Activated naive CD4-positive, alpha-beta T cell treated with anti-CD3 and anti-CD28 coated beads for 36 hours (primary cell): ENCODE measurements at regions of chr1 and their contacts with region 1.

Region 1: GRCh38 chr1:39720094-39720999 is 18.3 kb upstream of the PPIE start:
- DNase-seq: no peak
- H3K4me3 Mint-ChIP-seq: no peak overlapping the region
- H3K27ac Mint-ChIP-seq: no peak overlapping the region
- H3K4me1 Mint-ChIP-seq: no peaks in the 10 kb centered on the region
- H3K27me3 Mint-ChIP-seq: peaks cover 36% of the 10 kb centered on the region

Region 2: DNA sequence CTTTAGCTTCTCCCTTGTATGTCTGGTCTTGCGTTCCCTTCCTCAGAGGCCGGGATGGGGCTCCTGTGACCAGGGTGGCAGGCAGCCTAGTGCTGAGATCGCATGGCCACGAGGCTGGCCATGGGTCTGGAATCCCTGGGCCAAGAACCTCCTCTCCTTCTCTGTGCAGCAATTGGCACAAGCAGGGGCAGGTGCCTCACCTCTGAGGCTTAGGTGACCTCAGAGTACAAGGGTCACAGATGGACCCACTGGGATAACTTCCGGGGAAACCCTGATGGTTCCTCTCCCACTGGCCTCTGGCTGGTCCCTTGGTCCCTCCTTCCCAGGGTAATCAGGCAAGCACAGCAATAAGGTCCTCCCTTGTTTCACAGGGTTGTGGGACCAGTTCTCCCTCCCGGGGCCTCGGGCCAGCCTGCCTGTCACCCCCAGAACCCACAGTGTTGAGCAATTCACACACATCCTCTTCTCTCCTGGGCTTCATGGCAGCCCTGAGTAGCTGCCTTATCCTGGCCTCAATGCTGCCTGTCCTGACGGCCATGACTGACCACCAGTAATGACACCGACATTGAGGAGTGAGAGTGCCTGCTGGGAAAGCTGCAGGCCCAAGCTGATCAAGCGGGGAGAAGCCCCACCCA is 190.3 kb before region 1 on chr1:
- CTCF ChIA-PET with region 1: no interaction called
- intact Hi-C with region 1: no loop called
- DNase-seq: no peak
- H3K4me3 Mint-ChIP-seq: no peak overlapping the region
- H3K27ac Mint-ChIP-seq: no peak overlapping the region
- H3K4me1 Mint-ChIP-seq: peaks cover 2% of the 10 kb centered on the region
- H3K27me3 Mint-ChIP-seq: no peaks in the 10 kb centered on the region

Region 3: DNA sequence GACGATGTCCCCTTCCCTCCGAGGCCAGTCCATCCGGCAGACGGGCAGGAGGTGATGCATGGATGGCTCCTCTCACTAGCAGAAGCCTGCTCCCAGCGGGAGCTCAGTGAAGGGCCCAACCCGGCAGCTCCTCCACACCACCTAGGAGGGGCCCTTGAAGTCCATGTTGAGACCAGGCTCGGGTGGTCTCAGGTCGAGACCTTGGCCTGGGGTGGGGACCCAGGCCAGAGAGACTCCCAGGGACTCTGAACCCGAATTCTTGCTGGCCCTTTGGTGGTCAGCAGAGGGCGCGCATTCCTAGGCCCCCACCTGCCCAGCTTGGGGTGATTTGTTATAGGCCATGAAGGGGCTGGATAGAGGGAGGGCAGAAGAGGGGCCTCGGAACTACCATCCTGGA is 47.8 kb before region 1 on chr1:
- CTCF ChIA-PET with region 1: interaction called, 12 read pairs
- intact Hi-C with region 1: loop called (anchors 1 kb)
- DNase-seq: peak; percentile 54
- H3K4me3 Mint-ChIP-seq: peak overlapping the region; percentile 17
- H3K27ac Mint-ChIP-seq: no peak overlapping the region
- H3K4me1 Mint-ChIP-seq: peaks cover 6% of the 10 kb centered on the region
- H3K27me3 Mint-ChIP-seq: peaks cover 35% of the 10 kb centered on the region

Region 4: DNA sequence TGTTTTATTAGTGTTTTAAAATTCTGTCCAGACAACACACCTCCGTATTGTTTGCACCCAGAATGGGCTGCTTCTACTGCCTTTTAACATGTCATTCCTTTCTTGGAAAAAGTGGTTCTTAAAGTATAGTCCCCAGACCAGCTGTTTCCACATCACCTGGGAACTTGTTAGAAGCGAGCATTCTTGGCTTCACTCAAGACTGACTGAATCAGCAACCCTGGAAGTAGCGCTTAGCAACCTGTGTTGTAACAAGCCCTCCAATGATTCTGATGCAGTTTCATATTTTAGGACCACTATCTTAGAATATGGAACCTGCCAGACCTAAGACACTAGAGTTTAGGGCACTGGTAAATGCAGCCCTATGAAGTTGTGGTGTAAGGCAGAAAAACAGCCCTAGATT is 12.4 kb after region 1 on chr1:
- CTCF ChIA-PET with region 1: no interaction called
- intact Hi-C with region 1: no loop called
- DNase-seq: no peak
- H3K4me3 Mint-ChIP-seq: no peak overlapping the region
- H3K27ac Mint-ChIP-seq: no peak overlapping the region
- H3K4me1 Mint-ChIP-seq: peaks cover 5% of the 10 kb centered on the region
- H3K27me3 Mint-ChIP-seq: peaks cover 34% of the 10 kb centered on the region